Posterior cingulate gyrus (tissue), 11 donors: ENCODE measurements at regions of chr5 and their contacts with region 1.

Region 1: DNA sequence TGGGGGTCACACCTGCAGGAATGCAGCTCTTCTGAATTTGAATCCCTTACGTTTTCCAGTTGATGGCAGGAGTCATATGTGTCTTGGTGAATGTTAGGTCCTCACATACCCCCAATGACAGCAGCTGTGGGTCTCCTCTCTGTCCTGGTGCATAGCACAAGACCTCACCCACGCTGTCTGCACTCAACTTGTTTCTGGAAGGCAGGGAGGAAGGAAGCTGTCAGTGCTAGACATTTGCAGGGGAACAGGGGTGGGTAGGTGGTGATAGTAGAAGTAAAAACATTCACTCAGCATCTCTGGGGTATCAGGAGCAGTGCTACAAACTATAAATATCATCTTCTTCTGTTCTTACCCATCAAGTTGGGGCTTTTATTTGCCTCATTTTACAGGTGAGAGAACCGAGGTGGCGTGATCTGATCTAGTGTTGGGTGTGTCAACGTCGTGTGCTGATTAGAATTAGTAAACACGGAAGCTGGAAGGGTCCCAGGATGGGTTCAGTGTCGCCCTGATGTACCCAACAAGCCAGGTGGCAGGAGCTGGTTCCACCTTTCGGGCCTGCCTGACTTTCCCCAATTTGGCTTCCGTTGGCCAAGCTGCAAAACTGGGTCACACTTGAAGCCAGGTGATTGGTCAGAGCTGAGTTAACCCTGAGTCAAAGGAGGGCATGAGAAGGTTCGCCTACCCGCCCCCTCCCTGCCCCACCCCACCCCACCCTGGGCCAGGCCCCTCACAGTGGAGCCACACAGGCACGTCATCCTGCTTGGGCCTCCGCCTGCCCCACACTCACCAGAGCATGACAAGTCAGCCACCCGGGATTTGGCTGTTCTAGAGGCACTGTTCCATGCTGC is 15.8 kb downstream of the ERGIC1 start:
- DNase-seq: no peak

Region 2: DNA sequence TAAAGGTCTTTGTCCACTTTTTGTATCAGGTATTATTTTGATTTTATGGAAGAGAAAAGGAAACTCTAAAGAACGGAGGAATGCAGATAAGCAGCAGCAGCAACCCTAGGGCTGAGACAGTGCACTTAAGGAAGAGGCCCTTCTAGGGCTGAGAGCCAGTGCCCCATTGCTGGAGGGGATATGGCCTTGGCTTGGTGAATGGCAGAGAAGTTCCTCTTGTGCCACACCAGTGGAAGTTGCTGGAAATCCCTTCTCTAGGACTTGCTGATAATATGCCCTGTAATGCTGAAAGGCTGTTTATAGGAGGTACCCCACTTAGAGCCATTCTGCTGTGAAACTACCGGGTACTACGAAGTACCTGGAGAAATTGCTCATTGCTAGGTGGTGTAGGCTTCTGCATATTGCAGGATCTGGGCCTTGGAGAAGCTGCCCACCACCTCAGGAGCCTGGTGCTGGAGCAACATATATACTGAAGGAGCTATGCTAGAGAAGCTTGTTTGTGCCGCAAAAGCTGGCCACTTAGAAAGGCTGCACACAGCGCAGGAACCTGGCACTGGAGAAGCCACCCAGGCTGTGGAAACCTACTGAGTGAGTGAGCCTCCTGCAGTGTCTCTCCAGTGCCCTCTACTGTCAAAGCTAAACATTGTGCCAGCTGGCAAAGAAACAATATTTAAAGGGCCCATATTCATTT is 556.6 kb before region 1 on chr5:
- intact Hi-C with region 1: loop called (anchors 5 kb)
- DNase-seq: peak; percentile 41 to 94 (median 72)

Region 3: GRCh38 chr5:172973127-172973916 is 123.5 kb after region 1 on chr5:
- intact Hi-C with region 1: no loop called
- DNase-seq: no peak